Dendritic cell treated with granulocyte-macrophage colony-stimulating factor and Interleukin-4, amounts not matched to agents 40 ng/mL and 50 ng/mL, for 4 days (primary cell): ENCODE measurements at regions of chr7 and their contacts with region 1.

Region 1: GRCh38 chr7:81482600-81483186 is 287.2 kb downstream of the HGF start:
- H3K4me3 Mint-ChIP-seq: no peak overlapping the region
- H3K27ac Mint-ChIP-seq: no peak overlapping the region
- H3K4me1 Mint-ChIP-seq: peaks cover 5% of the 10 kb centered on the region
- H3K27me3 Mint-ChIP-seq: no peaks in the 10 kb centered on the region

Region 2: GRCh38 chr7:81430150-81430549 is 52.5 kb before region 1 on chr7:
- intact Hi-C with region 1: no loop called
- H3K4me3 Mint-ChIP-seq: no peak overlapping the region
- H3K27ac Mint-ChIP-seq: no peak overlapping the region
- H3K4me1 Mint-ChIP-seq: no peaks in the 10 kb centered on the region
- H3K27me3 Mint-ChIP-seq: no peaks in the 10 kb centered on the region

Region 3: DNA sequence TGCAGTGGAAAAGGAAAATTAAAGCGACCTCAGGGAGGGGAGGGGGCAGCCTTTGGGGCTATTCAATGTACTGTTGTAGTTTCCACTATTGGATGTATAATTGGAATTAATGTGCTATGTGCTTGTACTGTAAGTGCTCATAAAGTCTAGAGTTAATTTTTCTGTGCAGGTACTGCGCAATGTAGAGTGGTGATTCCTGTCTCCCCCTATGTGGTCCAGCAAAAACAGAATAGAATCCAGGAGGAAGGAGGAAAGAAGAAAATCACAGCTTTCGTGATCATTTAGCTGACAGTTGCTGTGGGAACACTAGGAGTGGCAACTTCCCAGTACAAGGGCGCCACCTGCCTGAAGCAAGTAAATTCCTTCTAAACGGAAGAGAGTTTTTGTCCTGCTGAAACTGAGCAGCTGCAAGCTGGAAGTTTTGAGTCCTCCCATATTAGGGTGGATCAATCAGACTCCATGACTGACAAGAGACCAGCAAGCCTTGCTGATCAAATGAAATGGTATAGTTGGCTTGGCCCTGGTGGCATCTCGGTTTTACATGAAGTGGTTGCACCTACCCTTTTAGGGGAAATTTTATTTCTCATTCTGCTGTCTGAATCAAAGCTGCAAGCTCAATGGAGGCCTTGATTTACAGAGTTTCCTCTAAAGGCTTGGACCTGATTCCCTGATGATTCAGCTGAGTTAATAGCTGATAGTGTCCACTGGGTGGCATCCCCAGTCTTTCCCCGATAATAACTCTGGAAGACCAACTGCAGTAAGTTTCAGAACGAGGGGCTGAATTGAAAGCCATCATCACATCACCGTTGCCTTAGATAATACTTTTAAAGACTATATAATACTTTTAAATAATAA is 12.6 kb before region 1 on chr7:
- intact Hi-C with region 1: no loop called
- H3K4me3 Mint-ChIP-seq: no peak overlapping the region
- H3K27ac Mint-ChIP-seq: no peak overlapping the region
- H3K4me1 Mint-ChIP-seq: no peaks in the 10 kb centered on the region
- H3K27me3 Mint-ChIP-seq: peaks cover 1% of the 10 kb centered on the region

Region 4: DNA sequence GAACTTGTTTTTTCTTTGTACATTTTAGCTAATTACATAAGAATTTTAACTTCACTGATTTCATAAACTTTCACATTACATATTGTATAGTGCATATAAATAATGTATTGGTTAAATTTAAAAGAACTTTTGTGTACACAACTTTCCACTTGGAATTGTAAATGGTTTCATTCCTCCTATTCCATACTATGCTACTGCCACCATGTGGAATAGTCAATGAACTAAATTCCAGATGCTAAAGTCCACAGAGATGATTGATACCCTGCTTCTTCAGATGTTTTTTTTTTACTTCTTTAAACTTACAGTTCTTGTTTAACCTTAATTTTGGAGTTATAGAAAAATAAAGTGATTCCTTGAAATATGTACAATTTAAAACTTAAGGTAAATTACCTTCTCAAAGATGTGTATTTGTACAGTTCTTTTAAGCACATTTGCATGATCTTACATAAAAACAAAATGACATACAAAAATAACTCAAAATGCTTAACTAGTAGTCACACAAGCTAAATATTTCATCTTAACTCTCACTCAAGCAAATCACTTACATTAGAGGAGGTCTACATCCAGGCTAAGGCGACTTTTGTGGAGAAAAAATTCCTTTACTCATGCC is 534.7 kb after region 1 on chr7:
- intact Hi-C with region 1: loop called (anchors 1 kb)
- H3K4me3 Mint-ChIP-seq: no peak overlapping the region
- H3K27ac Mint-ChIP-seq: no peak overlapping the region
- H3K4me1 Mint-ChIP-seq: no peaks in the 10 kb centered on the region
- H3K27me3 Mint-ChIP-seq: no peaks in the 10 kb centered on the region

Region 5: DNA sequence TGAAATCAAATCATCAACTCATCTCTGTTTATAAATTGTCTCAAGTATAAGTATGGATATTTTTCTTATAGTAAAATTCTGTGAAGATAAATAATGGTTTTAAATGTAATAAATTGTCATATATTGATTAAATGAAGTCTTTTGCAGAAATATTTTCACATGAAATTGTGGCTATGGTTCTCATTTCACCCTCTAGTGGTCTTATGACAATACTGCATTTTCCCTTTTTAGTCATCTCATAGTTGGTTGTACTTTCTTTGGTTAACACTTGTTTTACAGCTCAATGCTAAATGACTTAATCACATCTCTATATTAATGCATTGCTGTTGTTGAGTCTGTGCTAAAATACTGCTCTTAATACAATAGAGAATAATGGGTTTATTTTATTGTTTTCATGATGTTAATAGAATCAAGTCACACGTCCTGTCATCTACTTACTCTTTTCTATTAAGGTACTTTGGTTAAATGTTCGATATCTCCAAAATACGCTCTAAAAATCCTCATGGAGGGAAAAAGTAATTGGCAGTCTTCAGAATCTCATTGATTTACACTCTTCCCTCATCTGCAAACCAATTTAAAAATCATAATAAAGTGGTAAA is 998.9 kb after region 1 on chr7:
- intact Hi-C with region 1: loop called (anchors 10 kb)
- H3K4me3 Mint-ChIP-seq: no peak overlapping the region
- H3K27ac Mint-ChIP-seq: no peak overlapping the region
- H3K4me1 Mint-ChIP-seq: no peaks in the 10 kb centered on the region
- H3K27me3 Mint-ChIP-seq: no peaks in the 10 kb centered on the region

Region 6: GRCh38 chr7:82572195-82572880 is 1089.6 kb after region 1 on chr7:
- intact Hi-C with region 1: loop called (anchors 10 kb)
- H3K4me3 Mint-ChIP-seq: no peak overlapping the region
- H3K27ac Mint-ChIP-seq: no peak overlapping the region
- H3K4me1 Mint-ChIP-seq: no peaks in the 10 kb centered on the region
- H3K27me3 Mint-ChIP-seq: peaks cover 4% of the 10 kb centered on the region